ENCODE measurements at regions of chr16 and their contacts with region 1.

Region 1: GRCh38 chr16:3443108-3444031 is at the starts of genes NAA60 and ZNF597:
- DNase-seq: peak; percentile 79
- H3K4me3 Mint-ChIP-seq: peak within 1 kb of the TSS; percentile 99
- H3K27ac Mint-ChIP-seq: peak within 1 kb of the TSS; percentile 98
- H3K4me1 Mint-ChIP-seq: peaks cover 15% of the 10 kb centered on the region
- H3K27me3 Mint-ChIP-seq: no peaks in the 10 kb centered on the region
- total RNA-seq, gene NAA60: 35.4 and 38.3 TPM in 2 replicates
- total RNA-seq, gene ZNF597: 2.6 TPM in 2 replicates

Region 2: GRCh38 chr16:3087243-3088235 is 355.8 kb before region 1 on chr16:
- intact Hi-C with region 1: no loop called
- DNase-seq: no peak
- H3K4me3 Mint-ChIP-seq: peak overlapping the region; percentile 72
- H3K27ac Mint-ChIP-seq: peak overlapping the region; percentile 73
- H3K4me1 Mint-ChIP-seq: peaks cover 47% of the 10 kb centered on the region
- H3K27me3 Mint-ChIP-seq: no peaks in the 10 kb centered on the region

Region 3: GRCh38 chr16:3305109-3306068 is 138.0 kb before region 1 on chr16 and contains the starts of genes TIGD7 and ZNF75A:
- intact Hi-C with region 1: loop called (anchors 5 kb)
- DNase-seq: peak; percentile 79
- H3K4me3 Mint-ChIP-seq: peak within 1 kb of the TSS; percentile 75
- H3K27ac Mint-ChIP-seq: peak within 1 kb of the TSS; percentile 70
- H3K4me1 Mint-ChIP-seq: peaks cover 8% of the 10 kb centered on the region
- H3K27me3 Mint-ChIP-seq: no peaks in the 10 kb centered on the region
- total RNA-seq, gene TIGD7: 2.0 and 3.1 TPM in 2 replicates
- total RNA-seq, gene ZNF75A: 26.5 and 27.6 TPM in 2 replicates

Region 4: DNA sequence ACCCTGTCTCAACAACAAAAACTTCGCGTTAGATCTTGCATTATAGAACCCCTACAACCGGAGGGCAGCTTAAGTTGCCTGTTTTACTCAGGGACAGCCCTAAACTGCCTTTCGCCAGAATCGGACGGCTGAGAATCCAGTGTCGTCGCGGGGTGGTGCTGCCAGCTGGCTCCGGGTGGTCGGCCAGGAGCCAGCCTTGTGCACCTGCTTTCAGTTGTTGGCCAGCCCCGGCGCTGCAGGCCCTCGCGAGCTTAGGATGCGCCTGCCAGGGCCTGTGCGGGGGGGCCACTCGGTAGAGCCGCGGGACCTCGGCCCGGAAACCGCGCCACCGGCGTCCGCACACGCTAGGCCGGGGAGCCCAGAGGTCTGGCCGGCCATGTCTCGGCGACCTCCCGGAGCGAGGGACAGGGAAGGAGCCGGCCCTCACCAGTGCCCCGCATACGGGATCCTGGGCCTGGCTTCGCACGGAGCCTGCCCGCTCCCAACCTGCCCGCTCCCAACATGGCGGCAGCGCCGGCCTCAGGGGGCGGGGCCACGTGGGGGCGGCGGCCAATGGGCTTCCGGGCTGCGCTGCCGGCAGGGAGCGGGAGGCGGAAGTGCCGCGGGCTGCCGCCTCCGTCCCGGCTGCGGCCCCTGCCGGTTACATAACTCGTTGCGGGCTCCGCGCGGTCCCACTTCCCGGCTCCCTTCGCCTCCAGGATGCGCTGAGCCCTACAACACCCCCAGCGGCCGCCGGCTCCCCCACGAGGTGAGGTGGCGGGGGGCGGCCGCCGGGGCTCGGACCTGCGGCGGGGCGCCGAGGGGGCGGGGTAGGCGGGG is 14.3 kb after region 1 on chr16:
- intact Hi-C with region 1: loop called (anchors 1 kb)
- DNase-seq: peak; percentile 88
- H3K4me3 Mint-ChIP-seq: peak overlapping the region; percentile 83
- H3K27ac Mint-ChIP-seq: peak overlapping the region; percentile 77
- H3K4me1 Mint-ChIP-seq: peaks cover 42% of the 10 kb centered on the region
- H3K27me3 Mint-ChIP-seq: no peaks in the 10 kb centered on the region